Common myeloid progenitor, CD34-positive (primary cell): ENCODE measurements at regions of chr14 and their contacts with region 1.

Region 1: GRCh38 chr14:92585981-92586937 is 72.7 kb downstream of the RIN3 start:
- DNase-seq: peak; percentile 87 to 97 (median 93)
- H3K4me3 ChIP-seq: peak overlapping the region in 3 of 7 experiments; percentile 34 to 48 (median 46)
- H3K27ac ChIP-seq: peak overlapping the region in 1 of 2 experiments; percentile 74
- H3K4me1 ChIP-seq: peaks cover 32 to 94% (median 78%) of the 10 kb centered on the region in 4 experiments
- H3K27me3 ChIP-seq: no peaks in the 10 kb centered on the region

Region 2: GRCh38 chr14:92551044-92551841 is 35.0 kb before region 1 on chr14:
- CTCF ChIA-PET with region 1: interaction called, 10 read pairs
- POLR2A ChIA-PET with region 1: no interaction called
- DNase-seq: peak; percentile 64 to 88 (median 85)
- H3K4me3 ChIP-seq: peak overlapping the region in 2 of 7 experiments; percentile 13 to 33
- H3K27ac ChIP-seq: no peak overlapping the region
- H3K4me1 ChIP-seq: peaks cover 15 to 77% (median 62%) of the 10 kb centered on the region in 4 experiments
- H3K27me3 ChIP-seq: no peaks in the 10 kb centered on the region

Region 3: DNA sequence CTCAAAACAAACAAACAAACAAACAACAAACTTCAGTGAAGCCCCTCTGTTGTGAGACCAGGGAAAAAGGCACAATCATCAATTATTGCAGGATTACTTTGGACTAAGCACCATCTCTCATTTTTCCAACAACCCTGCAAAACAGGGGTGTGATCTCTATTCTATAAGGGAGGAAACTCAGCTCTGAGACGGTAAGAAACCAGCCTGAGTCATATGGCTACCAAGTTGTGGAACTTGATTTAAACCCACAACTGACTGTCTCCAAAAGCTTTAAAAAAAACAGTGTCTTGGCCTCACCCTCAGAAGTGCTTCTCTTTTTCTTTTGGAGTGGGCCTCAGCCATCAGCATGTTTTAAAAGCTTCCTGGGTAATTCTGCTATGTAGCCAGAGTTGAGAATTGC is 22.9 kb before region 1 on chr14:
- CTCF ChIA-PET with region 1: interaction called, 22 read pairs
- POLR2A ChIA-PET with region 1: no interaction called
- DNase-seq: peak in 2 of 3 donors; percentile 80 to 86
- H3K4me3 ChIP-seq: no peak overlapping the region
- H3K27ac ChIP-seq: no peak overlapping the region
- H3K4me1 ChIP-seq: peaks cover 0 to 28% (median 16%) of the 10 kb centered on the region in 4 experiments
- H3K27me3 ChIP-seq: no peaks in the 10 kb centered on the region

Region 4: DNA sequence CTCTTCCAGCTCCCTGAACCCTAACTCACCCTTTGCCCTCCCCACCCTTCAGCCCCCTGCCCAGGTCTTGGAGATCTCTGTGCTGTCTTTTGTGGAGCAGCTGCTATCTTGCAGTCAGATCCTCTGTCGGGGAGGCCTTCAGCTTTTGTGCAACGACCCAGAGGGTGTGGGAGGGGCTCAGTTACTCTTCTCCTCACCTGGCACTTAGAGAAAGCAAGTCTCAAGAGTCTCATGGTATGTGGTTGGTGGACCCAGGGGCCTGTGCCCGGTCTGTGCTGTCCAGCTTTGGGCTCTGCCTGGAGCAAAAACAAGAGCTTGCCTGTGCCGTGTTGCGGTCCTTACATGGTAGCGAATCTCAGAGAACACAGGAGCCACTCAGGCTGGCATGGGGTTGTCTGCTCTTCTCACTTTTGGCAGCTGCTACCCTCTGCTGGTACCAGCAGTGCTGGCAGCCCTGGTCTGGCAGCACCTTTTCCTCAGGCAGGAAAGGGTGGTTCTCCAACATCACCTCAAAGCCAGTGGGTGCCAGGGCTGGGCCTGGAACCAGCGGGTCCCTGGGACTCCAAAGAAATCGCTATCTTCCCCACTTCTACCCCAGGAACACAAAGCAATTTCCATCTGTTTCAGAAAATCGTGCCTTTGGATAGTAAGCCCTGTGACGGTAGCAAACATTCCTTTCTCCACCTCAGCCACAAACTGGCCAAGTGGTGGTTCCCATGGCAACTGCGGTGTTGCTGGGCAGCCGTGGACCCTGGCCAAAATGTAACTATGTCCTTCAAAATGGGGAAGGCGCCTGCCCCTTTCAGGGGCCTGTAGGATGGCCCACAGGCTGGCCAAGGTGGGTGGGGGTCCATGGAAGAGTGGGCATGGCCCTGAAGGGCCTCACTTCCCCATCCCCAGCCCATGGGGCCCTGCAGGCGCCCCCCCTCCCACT is 17.3 kb after region 1 on chr14:
- CTCF ChIA-PET with region 1: interaction called, 18 read pairs
- POLR2A ChIA-PET with region 1: no interaction called
- DNase-seq: peak; percentile 48 to 68 (median 66)
- H3K4me3 ChIP-seq: no peak overlapping the region
- H3K27ac ChIP-seq: no peak overlapping the region
- H3K4me1 ChIP-seq: peaks cover 4 to 17% (median 11%) of the 10 kb centered on the region in 4 experiments
- H3K27me3 ChIP-seq: no peaks in the 10 kb centered on the region

Region 5: DNA sequence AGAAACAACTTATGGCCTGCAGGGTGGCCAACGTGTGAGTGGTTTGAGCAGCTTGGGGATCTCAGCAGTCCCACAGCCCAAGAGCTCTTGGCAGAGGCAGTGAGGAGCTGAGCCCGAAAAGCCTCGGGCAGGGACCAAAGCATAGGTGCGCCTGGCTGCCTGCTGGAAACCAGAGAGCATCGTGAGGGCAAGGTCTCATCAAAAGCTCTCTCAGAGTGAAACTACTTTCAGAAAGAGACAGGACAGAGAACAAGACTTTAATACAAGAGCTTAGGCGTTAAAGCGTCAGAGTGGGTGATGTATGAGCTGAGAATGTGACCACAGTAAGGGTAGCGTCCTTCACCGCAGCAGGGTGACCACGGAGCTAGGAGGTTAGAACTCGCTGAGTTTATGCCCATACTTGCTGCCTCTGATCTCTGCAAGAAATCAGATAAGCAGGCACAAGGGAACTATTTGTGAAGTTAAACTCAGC is 131.3 kb after region 1 on chr14:
- CTCF ChIA-PET with region 1: no interaction called
- POLR2A ChIA-PET with region 1: no interaction called
- DNase-seq: peak in 2 of 3 donors; percentile 25 to 42
- H3K4me3 ChIP-seq: no peak overlapping the region
- H3K27ac ChIP-seq: no peak overlapping the region
- H3K4me1 ChIP-seq: no peaks in the 10 kb centered on the region
- H3K27me3 ChIP-seq: no peaks in the 10 kb centered on the region